PC-3 (cell line): ENCODE measurements at regions of chr9 and their contacts with region 1.

Region 1: GRCh38 chr9:76665458-76665857 is 98.8 kb upstream of the PCA3 start:
- DNase-seq: no peak
- ATAC-seq: no peak
- H3K4me3 ChIP-seq: no peak overlapping the region
- H3K27ac ChIP-seq: no peak overlapping the region
- H3K4me1 ChIP-seq: no peaks in the 10 kb centered on the region
- H3K27me3 ChIP-seq: no peaks in the 10 kb centered on the region
- CTCF ChIP-seq: no peak

Region 2: DNA sequence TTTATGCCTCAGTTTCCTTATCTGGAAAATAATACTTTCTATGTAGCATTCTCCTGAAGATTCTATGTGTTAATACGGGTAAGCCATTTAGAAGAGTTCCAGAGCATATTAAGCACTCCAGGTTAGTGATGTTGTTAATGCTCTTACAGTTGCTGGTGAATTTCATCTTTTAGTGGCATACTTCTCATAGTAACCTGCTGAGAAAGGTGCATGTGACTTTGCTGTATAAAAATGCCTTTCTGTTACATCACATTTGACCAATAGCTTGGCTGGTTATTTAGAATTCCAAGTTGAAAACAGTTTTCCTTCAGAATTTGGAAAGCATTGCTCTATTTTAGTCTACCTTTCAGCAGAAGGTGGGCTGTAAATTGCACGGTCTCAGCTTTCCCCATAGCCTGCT is 179.3 kb before region 1 on chr9:
- CTCF ChIA-PET with region 1: interaction called, 11 read pairs
- POLR2A ChIA-PET with region 1: no interaction called
- intact Hi-C with region 1: no loop called
- DNase-seq: no peak
- ATAC-seq: no peak
- H3K4me3 ChIP-seq: no peak overlapping the region
- H3K27ac ChIP-seq: no peak overlapping the region
- H3K4me1 ChIP-seq: no peaks in the 10 kb centered on the region
- H3K27me3 ChIP-seq: no peaks in the 10 kb centered on the region
- CTCF ChIP-seq: no peak